Transverse colon (tissue), 4 donors: ENCODE measurements at regions of chr1 and their contacts with region 1.

Region 1: GRCh38 chr1:81635816-81636215 is 164.9 kb upstream of the ADGRL2 start:
- DNase-seq: no peak
- H3K4me3 ChIP-seq: no peak overlapping the region
- H3K27ac ChIP-seq: no peak overlapping the region
- H3K4me1 ChIP-seq: no peaks in the 10 kb centered on the region
- H3K27me3 ChIP-seq: no peaks in the 10 kb centered on the region
- CTCF ChIP-seq: no peak
- EP300 ChIP-seq: no peak
- POLR2A ChIP-seq: no peak

Region 2: DNA sequence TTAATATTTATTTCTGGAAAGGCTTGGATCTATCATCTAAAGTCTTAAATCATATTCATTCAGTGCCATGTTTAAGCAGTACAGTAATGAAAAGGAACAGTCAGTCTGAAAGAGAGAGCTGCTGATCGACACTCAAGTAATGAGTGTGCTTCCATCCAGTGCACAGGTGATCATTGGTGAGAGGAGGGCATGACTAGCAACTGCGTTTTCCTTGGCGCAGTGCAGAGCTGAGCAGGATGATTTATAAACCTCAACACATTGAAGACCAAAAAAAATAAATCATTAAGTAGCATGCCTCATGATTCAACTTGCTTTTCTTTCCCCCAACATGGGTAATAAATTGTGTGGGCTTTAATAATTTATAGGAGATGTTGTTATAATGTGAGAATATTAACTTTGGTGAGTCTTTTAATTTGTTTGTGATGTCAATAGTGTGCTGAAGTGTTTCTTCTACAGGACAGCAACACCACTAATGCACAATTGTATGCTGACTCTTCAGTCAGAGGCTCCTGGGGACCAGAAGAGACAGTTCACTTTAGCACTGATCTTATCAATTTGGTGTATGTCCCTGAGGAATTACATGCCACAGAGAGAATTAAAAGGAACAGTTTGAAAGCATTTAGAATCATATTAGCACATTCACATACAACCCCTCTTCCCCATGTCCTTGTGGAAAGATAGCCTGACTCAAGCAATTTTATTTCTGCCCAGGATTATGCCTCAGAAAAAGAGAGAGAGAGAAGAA is 34.8 kb before region 1 on chr1:
- in situ Hi-C with region 1: no loop called
- intact Hi-C with region 1: no loop called
- DNase-seq: no peak
- H3K4me3 ChIP-seq: no peak overlapping the region
- H3K27ac ChIP-seq: no peak overlapping the region
- H3K4me1 ChIP-seq: no peaks in the 10 kb centered on the region
- H3K27me3 ChIP-seq: no peaks in the 10 kb centered on the region
- CTCF ChIP-seq: no peak
- EP300 ChIP-seq: no peak
- POLR2A ChIP-seq: no peak

Region 3: GRCh38 chr1:81650776-81651175 is 15.0 kb after region 1 on chr1:
- in situ Hi-C with region 1: no loop called
- intact Hi-C with region 1: loop called (anchors 1 kb)
- DNase-seq: no peak
- H3K4me3 ChIP-seq: no peak overlapping the region
- H3K27ac ChIP-seq: no peak overlapping the region
- H3K4me1 ChIP-seq: no peaks in the 10 kb centered on the region
- H3K27me3 ChIP-seq: no peaks in the 10 kb centered on the region
- CTCF ChIP-seq: no peak
- EP300 ChIP-seq: no peak
- POLR2A ChIP-seq: no peak

Region 4: GRCh38 chr1:81827938-81828337 is 192.1 kb after region 1 on chr1:
- in situ Hi-C with region 1: no loop called
- intact Hi-C with region 1: no loop called
- DNase-seq: no peak
- H3K4me3 ChIP-seq: no peak overlapping the region
- H3K27ac ChIP-seq: no peak overlapping the region
- H3K4me1 ChIP-seq: no peaks in the 10 kb centered on the region
- H3K27me3 ChIP-seq: no peaks in the 10 kb centered on the region
- CTCF ChIP-seq: no peak
- EP300 ChIP-seq: no peak
- POLR2A ChIP-seq: no peak